ENCODE measurements at regions of chr3 and their contacts with region 1.

Region 1: DNA sequence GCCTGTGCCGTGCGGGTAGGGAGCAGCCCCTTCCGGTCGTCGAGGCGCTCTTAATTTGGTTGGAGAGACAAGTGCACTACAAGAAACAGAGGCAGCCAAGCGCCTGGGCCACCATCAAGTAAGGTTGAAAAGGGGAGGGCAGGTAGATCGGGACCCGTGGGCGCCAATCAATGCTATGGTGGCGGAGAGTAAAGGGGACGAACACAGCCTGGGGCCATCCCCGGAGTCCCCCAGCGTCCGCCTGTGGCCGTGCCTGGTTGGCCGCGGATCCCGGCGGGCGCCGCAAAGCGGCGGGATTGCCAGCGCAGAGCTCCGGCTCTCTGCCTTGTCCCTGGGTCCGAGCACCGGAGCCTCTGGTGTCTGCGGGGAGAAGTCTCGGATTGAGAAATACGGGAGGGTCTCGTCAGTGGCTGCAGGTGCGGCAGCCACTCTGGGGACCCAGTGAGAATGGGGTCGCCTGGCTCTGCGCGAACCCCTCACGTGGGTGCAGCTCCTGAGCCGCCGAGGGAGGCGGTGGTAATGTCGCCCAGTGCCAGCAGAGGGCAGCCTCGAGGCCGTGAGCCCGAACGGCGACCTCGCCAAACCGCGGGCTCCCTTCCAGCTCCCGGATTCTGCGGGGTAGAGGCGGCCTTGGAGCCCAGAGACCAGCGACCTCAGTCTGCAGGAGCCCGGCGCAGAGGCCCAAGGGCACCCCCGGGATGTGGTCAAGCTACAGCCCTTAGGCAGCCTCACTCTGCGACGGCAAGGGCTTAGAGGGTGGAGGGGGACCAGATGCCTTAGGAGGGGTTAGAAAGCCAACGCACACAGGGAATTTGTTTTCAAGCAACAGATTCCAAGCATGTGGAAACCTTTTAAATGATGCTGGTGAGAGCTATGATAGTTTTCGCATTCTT is 10.8 kb downstream of the FOXL2 start:
- DNase-seq: peak; percentile 80
- H3K4me3 Mint-ChIP-seq: peak overlapping the region; percentile 70
- H3K27ac Mint-ChIP-seq: no peak overlapping the region
- H3K4me1 Mint-ChIP-seq: peaks cover 30% of the 10 kb centered on the region
- H3K27me3 Mint-ChIP-seq: peaks cover 70% of the 10 kb centered on the region

Region 2: GRCh38 chr3:138434276-138434874 is 501.7 kb before region 1 on chr3 and contains the start of gene ESYT3:
- CTCF ChIA-PET with region 1: interaction called, 6 read pairs
- POLR2A ChIA-PET with region 1: no interaction called
- intact Hi-C with region 1: loop called (anchors 5 kb)
- DNase-seq: peak; percentile 80
- H3K4me3 Mint-ChIP-seq: peak within 1 kb of the TSS; percentile 69
- H3K27ac Mint-ChIP-seq: no peak within 1 kb of the TSS
- H3K4me1 Mint-ChIP-seq: peaks cover 10% of the 10 kb centered on the region
- H3K27me3 Mint-ChIP-seq: peaks cover 47% of the 10 kb centered on the region
- total RNA-seq, gene ESYT3: 0.17 to 0.19 TPM

Region 3: GRCh38 chr3:138923531-138923994 is 12.5 kb before region 1 on chr3:
- CTCF ChIA-PET with region 1: interaction called, 171 read pairs
- POLR2A ChIA-PET with region 1: no interaction called
- intact Hi-C with region 1: no loop called
- DNase-seq: peak; percentile 89
- H3K4me3 Mint-ChIP-seq: no peak overlapping the region
- H3K27ac Mint-ChIP-seq: no peak overlapping the region
- H3K4me1 Mint-ChIP-seq: no peaks in the 10 kb centered on the region
- H3K27me3 Mint-ChIP-seq: peaks cover 2% of the 10 kb centered on the region

Region 4: GRCh38 chr3:138946181-138947059 is 10.3 kb after region 1 on chr3:
- CTCF ChIA-PET with region 1: interaction called, 39 read pairs
- POLR2A ChIA-PET with region 1: no interaction called
- intact Hi-C with region 1: loop called (anchors 1 kb)
- DNase-seq: peak; percentile 46
- H3K4me3 Mint-ChIP-seq: peak overlapping the region; percentile 60
- H3K27ac Mint-ChIP-seq: no peak overlapping the region
- H3K4me1 Mint-ChIP-seq: peaks cover 40% of the 10 kb centered on the region
- H3K27me3 Mint-ChIP-seq: peaks cover 78% of the 10 kb centered on the region

Region 5: GRCh38 chr3:138960417-138960852 is 24.3 kb after region 1 on chr3:
- CTCF ChIA-PET with region 1: interaction called, 8 read pairs
- POLR2A ChIA-PET with region 1: no interaction called
- intact Hi-C with region 1: loop called (anchors 2 kb)
- DNase-seq: no peak
- H3K4me3 Mint-ChIP-seq: no peak overlapping the region
- H3K27ac Mint-ChIP-seq: no peak overlapping the region
- H3K4me1 Mint-ChIP-seq: peaks cover 11% of the 10 kb centered on the region
- H3K27me3 Mint-ChIP-seq: peaks cover 44% of the 10 kb centered on the region

Region 6: GRCh38 chr3:138974462-138974861 is 38.4 kb after region 1 on chr3:
- CTCF ChIA-PET with region 1: interaction called, 8 read pairs
- POLR2A ChIA-PET with region 1: no interaction called
- intact Hi-C with region 1: loop called (anchors 2 kb)
- DNase-seq: no peak
- H3K4me3 Mint-ChIP-seq: no peak overlapping the region
- H3K27ac Mint-ChIP-seq: no peak overlapping the region
- H3K4me1 Mint-ChIP-seq: no peaks in the 10 kb centered on the region
- H3K27me3 Mint-ChIP-seq: peaks cover 21% of the 10 kb centered on the region

Region 7: GRCh38 chr3:139329345-139329850 is 393.3 kb after region 1 on chr3:
- CTCF ChIA-PET with region 1: interaction called, 30 read pairs
- POLR2A ChIA-PET with region 1: no interaction called
- intact Hi-C with region 1: loop called (anchors 1 kb)
- DNase-seq: peak; percentile 93
- H3K4me3 Mint-ChIP-seq: peak overlapping the region; percentile 41
- H3K27ac Mint-ChIP-seq: no peak overlapping the region
- H3K4me1 Mint-ChIP-seq: peaks cover 3% of the 10 kb centered on the region
- H3K27me3 Mint-ChIP-seq: peaks cover 23% of the 10 kb centered on the region